ENCODE measurements at regions of chr9 and their contacts with region 1.

Region 1: DNA sequence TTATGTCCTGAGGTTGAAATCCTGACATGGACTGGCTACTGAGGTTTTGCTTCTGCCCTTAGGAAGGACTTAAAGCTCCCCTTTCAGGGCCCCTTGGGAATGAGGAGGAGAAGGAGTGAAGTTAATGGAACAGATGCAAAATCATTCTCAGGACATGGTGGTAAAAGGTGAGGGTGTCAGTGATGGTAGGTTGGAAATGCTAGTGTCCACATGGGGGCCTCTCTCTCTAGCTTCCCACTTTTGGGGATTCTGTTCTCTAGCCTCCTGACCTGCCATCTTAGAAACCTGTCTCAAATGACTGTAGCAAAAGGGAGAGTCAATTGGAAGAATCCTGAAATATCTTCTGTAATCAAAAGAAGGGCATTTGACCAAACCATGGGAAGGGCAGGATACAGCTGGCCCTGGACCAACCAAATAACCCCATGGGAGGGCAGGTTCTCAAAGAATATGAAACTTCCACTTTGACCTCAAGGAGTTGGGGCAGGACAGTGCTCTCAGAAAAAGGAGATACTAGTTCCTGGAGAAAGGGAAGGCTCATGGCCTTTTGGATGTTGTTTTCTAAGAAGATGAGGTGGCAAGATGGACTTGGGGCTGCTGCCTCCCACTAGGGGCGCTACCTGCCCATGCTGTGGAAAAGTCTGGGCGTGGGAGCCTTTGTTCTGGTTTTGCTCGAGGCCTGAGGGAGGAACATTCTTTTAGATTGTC is 21.2 kb upstream of the MLANA start:
- DNase-seq: peak in 2 of 9 experiments; percentile 23 to 30
- ATAC-seq: no peak
- H3K4me3 ChIP-seq: no peak overlapping the region
- H3K4me3 Mint-ChIP-seq: no peak overlapping the region
- H3K27ac ChIP-seq: no peak overlapping the region
- H3K27ac Mint-ChIP-seq: no peak overlapping the region
- H3K4me1 ChIP-seq: no peaks in the 10 kb centered on the region
- H3K4me1 Mint-ChIP-seq: peaks cover 13% of the 10 kb centered on the region
- H3K27me3 ChIP-seq: no peaks in the 10 kb centered on the region
- H3K27me3 Mint-ChIP-seq: no peaks in the 10 kb centered on the region
- CTCF ChIP-seq: no peak

Region 2: GRCh38 chr9:5767968-5768918 is 101.2 kb before region 1 on chr9:
- CTCF ChIA-PET with region 1: no interaction called
- POLR2A ChIA-PET with region 1: no interaction called
- intact Hi-C with region 1: no loop called
- DNase-seq: no peak
- ATAC-seq: peak; percentile 52
- H3K4me3 ChIP-seq: no peak overlapping the region
- H3K4me3 Mint-ChIP-seq: no peak overlapping the region
- H3K27ac ChIP-seq: no peak overlapping the region
- H3K27ac Mint-ChIP-seq: peak overlapping the region; percentile 46
- H3K4me1 ChIP-seq: no peaks in the 10 kb centered on the region
- H3K4me1 Mint-ChIP-seq: peaks cover 13% of the 10 kb centered on the region
- H3K27me3 ChIP-seq: no peaks in the 10 kb centered on the region
- H3K27me3 Mint-ChIP-seq: no peaks in the 10 kb centered on the region
- CTCF ChIP-seq: no peak

Region 3: DNA sequence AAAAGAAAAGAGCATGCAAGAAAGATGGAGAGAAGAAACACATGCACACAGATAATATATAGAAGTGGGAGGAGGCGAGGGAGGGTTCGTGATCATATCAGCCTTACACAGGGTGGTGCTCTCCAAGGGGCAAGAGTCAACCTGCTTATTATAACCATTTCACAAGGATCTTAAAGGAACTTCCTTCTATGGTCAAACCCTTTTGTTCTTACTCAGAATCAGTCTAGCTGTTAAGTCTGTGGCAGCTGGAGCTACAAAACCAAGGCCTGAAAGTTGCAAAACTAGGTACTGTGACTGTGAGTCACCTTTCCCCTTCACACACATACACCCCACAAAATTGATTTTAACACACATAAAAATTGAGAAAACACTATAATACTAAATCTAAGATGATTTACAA is 18.0 kb before region 1 on chr9:
- CTCF ChIA-PET with region 1: interaction called, 6 read pairs
- POLR2A ChIA-PET with region 1: no interaction called
- intact Hi-C with region 1: loop called in 1 of 2 experiments (anchors 2 kb)
- DNase-seq: peak in 7 of 9 experiments; percentile 17 to 67 (median 39)
- ATAC-seq: peak; percentile 86
- H3K4me3 ChIP-seq: no peak overlapping the region
- H3K4me3 Mint-ChIP-seq: no peak overlapping the region
- H3K27ac ChIP-seq: peak overlapping the region in 1 of 2 experiments; percentile 34
- H3K27ac Mint-ChIP-seq: peak overlapping the region; percentile 19
- H3K4me1 ChIP-seq: peaks cover 13% of the 10 kb centered on the region
- H3K4me1 Mint-ChIP-seq: peaks cover 32% of the 10 kb centered on the region
- H3K27me3 ChIP-seq: no peaks in the 10 kb centered on the region
- H3K27me3 Mint-ChIP-seq: no peaks in the 10 kb centered on the region
- CTCF ChIP-seq: no peak